ENCODE measurements at regions of chr7 and their contacts with region 1.

Region 1: DNA sequence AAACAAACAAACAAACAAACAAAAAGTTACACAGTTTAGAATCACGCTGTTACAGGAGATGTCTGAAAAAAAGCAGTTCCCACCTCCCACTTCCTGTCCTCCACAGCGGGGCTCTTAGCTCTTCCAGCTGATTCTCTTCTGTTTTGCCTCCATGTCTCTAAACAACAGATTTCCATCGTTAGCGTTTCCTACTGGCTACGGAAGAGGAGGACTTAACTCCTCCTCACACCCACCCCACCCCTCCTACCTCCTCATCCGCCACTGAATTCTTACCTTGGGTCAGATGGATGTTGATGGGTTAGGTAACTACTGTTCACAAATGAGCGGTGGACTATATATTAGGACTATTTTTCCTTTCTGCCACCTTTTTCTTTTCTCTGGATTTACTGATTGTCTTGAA is 36.8 kb upstream of the NUB1 start:
- DNase-seq: peak in 3 of 4 experiments; percentile 16 to 24 (median 17)
- ATAC-seq: no peak
- H3K4me3 ChIP-seq: no peak overlapping the region
- H3K27ac ChIP-seq: no peak overlapping the region
- H3K4me1 ChIP-seq: peaks cover 3 to 8% of the 10 kb centered on the region in 2 experiments; a peak in 4 of 5 replicates
- H3K27me3 ChIP-seq: peaks cover 35 to 80% of the 10 kb centered on the region in 2 experiments; a peak in 4 of 5 replicates
- CTCF ChIP-seq: no peak
- EP300 ChIP-seq: no peak
- POLR2A ChIP-seq: no peak
- RAD21 ChIP-seq: no peak

Region 2: GRCh38 chr7:151123822-151124464 is 180.9 kb before region 1 on chr7:
- CTCF ChIA-PET with region 1: interaction called, 11 read pairs
- POLR2A ChIA-PET with region 1: interaction called, 3 read pairs
- in situ Hi-C with region 1: no loop called
- intact Hi-C with region 1: loop called (anchors 2 kb)
- DNase-seq: peak; percentile 95 to 97 (median 96)
- ATAC-seq: peak; percentile 100
- H3K4me3 ChIP-seq: no peak overlapping the region
- H3K27ac ChIP-seq: no peak overlapping the region
- H3K4me1 ChIP-seq: peaks cover 0 to 47% of the 10 kb centered on the region in 2 experiments; a peak in 1 of 5 replicates
- H3K27me3 ChIP-seq: no peaks in the 10 kb centered on the region; a peak in 1 of 5 replicates
- CTCF ChIP-seq: peak; percentile 100
- EP300 ChIP-seq: no peak
- POLR2A ChIP-seq: no peak
- RAD21 ChIP-seq: peak; percentile 86 to 94

Region 3: DNA sequence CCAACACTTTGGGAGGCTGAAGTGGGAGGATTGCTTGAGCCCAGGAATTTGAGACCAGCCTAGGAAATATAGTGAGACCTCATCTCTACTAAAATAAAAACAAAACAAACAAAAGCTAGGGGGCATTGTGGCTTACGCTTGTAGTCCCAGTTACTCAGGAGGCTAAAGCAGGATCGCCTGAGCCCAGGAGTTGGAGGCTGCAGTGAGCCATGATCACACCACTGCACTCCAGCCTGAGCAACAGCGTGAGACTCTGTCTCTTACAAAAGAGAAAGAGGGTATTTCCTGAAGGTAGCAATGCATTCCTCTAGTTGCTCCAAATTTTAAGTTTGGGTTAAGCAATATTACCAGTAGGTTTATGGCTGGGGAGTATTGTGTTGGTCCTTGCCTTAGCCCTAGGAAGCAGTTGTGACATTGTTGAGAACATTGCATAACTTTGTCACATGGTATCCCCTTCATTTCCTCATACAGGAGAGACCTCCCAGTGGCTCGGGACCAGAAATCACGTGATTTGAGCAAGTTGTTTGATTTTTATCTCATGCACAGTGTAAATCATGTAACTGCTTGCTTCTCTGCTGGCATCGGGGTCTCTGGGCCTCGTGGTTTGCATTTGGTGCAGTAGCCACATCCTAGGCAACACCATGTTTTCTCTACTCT is 33.0 kb before region 1 on chr7:
- CTCF ChIA-PET with region 1: no interaction called
- POLR2A ChIA-PET with region 1: no interaction called
- in situ Hi-C with region 1: no loop called
- intact Hi-C with region 1: loop called (anchors 2 kb)
- DNase-seq: no peak
- ATAC-seq: peak; percentile 54
- H3K4me3 ChIP-seq: no peak overlapping the region
- H3K27ac ChIP-seq: no peak overlapping the region
- H3K4me1 ChIP-seq: peaks cover 16 to 34% of the 10 kb centered on the region in 2 experiments; a peak in 4 of 5 replicates
- H3K27me3 ChIP-seq: peaks cover 20 to 89% of the 10 kb centered on the region in 2 experiments; a peak in 4 of 5 replicates
- CTCF ChIP-seq: peak; percentile 20 to 42 (median 30); a peak in 2 of 6 replicates
- EP300 ChIP-seq: peak; percentile 6; the same call in 1 of the 2 replicates
- POLR2A ChIP-seq: no peak
- RAD21 ChIP-seq: peak in 1 of 2 experiments; percentile 12; a peak in 1 of 4 replicates

Region 4: GRCh38 chr7:151320263-151320845 is 15.5 kb after region 1 on chr7:
- CTCF ChIA-PET with region 1: no interaction called
- POLR2A ChIA-PET with region 1: no interaction called
- in situ Hi-C with region 1: no loop called
- intact Hi-C with region 1: no loop called
- DNase-seq: no peak
- ATAC-seq: no peak
- H3K4me3 ChIP-seq: no peak overlapping the region
- H3K27ac ChIP-seq: no peak overlapping the region
- H3K4me1 ChIP-seq: no peaks in the 10 kb centered on the region
- H3K27me3 ChIP-seq: peaks cover 7 to 13% of the 10 kb centered on the region in 2 experiments; a peak in 4 of 5 replicates
- CTCF ChIP-seq: no peak
- EP300 ChIP-seq: no peak
- POLR2A ChIP-seq: no peak
- RAD21 ChIP-seq: no peak

Region 5: DNA sequence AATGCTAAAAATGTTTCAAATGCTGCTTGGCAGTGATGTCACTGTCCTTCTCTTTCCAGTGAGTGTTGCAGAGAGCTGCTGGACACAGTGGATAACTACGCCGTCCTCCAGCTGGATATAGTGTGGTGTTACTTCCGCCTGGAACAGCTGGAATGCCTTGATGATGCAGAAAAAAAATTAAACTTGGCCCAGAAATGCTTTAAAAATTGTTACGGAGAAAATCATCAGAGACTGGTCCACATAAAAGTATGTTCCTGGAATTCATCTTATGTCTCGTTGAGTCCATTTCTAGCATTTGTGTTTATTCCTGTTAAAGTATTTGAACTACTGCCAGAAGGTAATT is 62.0 kb after region 1 on chr7:
- CTCF ChIA-PET with region 1: no interaction called
- POLR2A ChIA-PET with region 1: no interaction called
- in situ Hi-C with region 1: no loop called
- intact Hi-C with region 1: no loop called
- DNase-seq: no peak
- ATAC-seq: no peak
- H3K4me3 ChIP-seq: no peak overlapping the region
- H3K27ac ChIP-seq: no peak overlapping the region
- H3K4me1 ChIP-seq: peaks cover 0 to 4% of the 10 kb centered on the region in 2 experiments; a peak in 3 of 5 replicates
- H3K27me3 ChIP-seq: no peaks in the 10 kb centered on the region
- CTCF ChIP-seq: no peak
- EP300 ChIP-seq: no peak
- POLR2A ChIP-seq: no peak
- RAD21 ChIP-seq: no peak